ENCODE measurements at regions of chr7 and their contacts with region 1.

Region 1: DNA sequence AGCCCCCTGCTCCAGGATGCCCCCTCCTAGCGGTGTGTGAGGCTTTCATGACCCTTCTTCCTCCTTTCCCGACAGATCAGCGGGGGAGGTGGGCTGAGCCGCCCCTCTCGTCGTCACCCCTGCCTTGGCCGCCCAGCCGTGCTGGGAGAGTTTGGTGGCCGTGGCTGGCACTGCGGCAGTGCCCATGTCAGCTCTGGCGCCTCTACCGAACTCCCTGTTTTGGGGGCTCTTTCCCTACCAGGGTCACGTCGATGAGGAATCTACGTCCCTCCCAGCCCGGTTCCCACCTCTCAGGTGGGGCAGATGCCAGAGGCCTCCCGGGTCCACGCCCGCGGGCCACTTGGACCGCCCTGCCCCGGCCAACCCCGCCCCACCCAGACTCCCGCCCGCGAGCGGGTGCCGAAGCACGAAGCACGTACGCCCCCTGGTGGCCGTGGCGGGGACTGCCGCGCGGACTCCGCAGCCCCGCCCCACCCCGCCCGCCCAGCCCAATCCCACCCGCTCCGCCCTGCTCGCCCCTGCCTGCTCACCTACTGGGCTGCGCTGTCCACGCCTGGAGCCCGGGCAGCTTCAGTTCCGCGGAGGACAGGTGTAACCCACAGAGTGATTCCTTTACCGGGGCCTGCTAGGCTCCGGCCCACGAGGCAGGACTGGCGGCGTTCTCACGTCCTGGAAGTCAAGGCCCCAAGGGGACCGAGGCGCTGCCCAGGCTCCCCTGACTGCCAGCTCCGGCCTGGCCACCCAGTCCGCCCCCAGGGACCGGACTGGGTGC is 127.1 kb downstream of the UBE2H start:
- DNase-seq: peak; percentile 73
- H3K4me3 ChIP-seq: peak overlapping the region; percentile 70 to 84 (median 70)
- H3K27ac ChIP-seq: peak overlapping the region; percentile 62
- H3K4me1 ChIP-seq: peaks cover 27% of the 10 kb centered on the region
- H3K27me3 ChIP-seq: no peaks in the 10 kb centered on the region
- CTCF ChIP-seq: peak in 1 of 2 donors; percentile 66

Region 2: DNA sequence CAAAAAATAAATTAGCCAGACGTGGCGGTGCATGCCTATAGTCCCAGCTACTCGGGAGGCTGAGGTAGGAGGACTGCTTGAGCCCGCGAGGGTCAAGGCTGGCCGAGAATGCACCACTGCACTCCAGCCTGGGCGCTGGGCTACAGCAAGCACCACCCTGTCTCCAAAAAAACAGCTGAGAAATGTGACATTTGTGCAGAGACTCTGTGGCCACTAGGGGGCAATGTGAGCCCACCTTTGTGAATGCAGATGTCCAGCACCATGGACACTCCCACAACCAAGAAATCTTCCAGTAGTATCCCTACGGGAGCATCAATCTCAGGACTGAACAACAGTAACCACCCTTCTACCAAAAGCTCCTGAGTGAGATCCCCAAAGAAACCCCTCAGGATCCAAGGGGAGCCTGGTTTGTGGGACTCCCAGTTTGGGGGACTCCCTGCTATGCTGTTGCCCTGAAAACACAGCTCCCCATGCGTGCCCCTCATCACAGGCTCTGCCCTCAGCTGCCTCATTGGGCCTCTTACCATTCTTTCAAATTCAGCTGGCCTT is 607.1 kb before region 1 on chr7:
- CTCF ChIA-PET with region 1: interaction called, 7 read pairs
- dilution Hi-C with region 1: no loop called
- in situ Hi-C with region 1: no loop called
- intact Hi-C with region 1: loop called (anchors 5 kb)
- DNase-seq: peak; percentile 72
- H3K4me3 ChIP-seq: no peak overlapping the region
- H3K27ac ChIP-seq: no peak overlapping the region
- H3K4me1 ChIP-seq: no peaks in the 10 kb centered on the region
- H3K27me3 ChIP-seq: no peaks in the 10 kb centered on the region
- CTCF ChIP-seq: peak; percentile 88 to 89

Region 3: GRCh38 chr7:129502376-129502776 is 323.3 kb before region 1 on chr7 and contains the start of gene SMKR1:
- CTCF ChIA-PET with region 1: no interaction called
- dilution Hi-C with region 1: no loop called
- in situ Hi-C with region 1: no loop called
- intact Hi-C with region 1: loop called (anchors 5 kb)
- DNase-seq: peak; percentile 60
- H3K4me3 ChIP-seq: peak within 1 kb of the TSS; percentile 52 to 61 (median 53)
- H3K27ac ChIP-seq: no peak within 1 kb of the TSS
- H3K4me1 ChIP-seq: peaks cover 7% of the 10 kb centered on the region
- H3K27me3 ChIP-seq: no peaks in the 10 kb centered on the region
- CTCF ChIP-seq: no peak
- total RNA-seq, gene SMKR1: 0.80 TPM in 1 of 2 donors, not detected in the other

Region 4: DNA sequence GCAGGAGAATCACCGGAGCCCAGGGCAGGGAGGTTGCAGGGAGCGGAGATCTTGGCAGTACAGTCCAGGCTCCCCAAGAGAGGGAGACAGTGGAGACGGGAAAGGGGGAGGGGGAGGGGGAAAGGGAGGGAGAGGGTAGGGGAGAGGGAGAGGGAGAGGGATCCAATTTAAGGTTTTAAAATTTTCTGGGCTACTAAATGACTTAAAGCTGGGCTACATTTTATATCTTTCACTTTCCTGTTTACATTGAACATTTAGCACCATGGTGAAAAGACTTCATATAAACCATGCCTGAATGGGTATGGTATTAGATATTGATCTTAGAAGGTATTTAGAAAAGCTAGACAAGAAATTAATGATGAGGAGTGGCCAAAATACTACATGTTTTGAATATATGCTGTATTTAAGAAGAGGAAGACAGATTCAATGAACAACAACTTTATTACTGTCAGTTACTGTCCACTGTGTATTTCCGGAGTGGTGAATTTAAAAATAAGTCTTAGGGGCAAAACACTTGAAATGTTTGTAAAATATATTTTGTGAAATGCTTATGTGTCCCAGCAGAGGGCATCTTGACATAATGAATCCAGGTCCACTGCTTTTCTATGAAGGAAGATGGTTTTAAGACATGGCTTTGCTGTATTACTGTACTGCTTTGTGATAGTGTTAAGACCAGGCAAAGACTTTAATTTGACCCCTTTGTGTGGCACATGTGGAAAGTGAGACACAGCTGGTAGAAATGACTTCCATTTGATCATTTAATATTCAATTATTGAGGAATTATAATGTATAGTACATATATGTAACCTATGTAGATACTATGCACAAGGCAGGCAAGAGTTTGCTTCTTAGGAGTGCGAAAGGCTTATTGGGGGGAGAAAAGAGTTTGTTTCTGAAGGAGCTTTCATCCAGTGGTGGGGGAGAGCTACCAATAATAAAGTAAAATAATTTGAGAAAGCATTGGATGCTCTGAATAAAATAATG is 161.4 kb before region 1 on chr7:
- CTCF ChIA-PET with region 1: interaction called, 3 read pairs
- dilution Hi-C with region 1: no loop called
- in situ Hi-C with region 1: loop called (anchors 5 kb)
- intact Hi-C with region 1: loop called (anchors 1 kb)
- DNase-seq: peak; percentile 48
- H3K4me3 ChIP-seq: no peak overlapping the region
- H3K27ac ChIP-seq: peak overlapping the region; percentile 4
- H3K4me1 ChIP-seq: peaks cover 17% of the 10 kb centered on the region
- H3K27me3 ChIP-seq: no peaks in the 10 kb centered on the region
- CTCF ChIP-seq: peak; percentile 65 to 66

Region 5: DNA sequence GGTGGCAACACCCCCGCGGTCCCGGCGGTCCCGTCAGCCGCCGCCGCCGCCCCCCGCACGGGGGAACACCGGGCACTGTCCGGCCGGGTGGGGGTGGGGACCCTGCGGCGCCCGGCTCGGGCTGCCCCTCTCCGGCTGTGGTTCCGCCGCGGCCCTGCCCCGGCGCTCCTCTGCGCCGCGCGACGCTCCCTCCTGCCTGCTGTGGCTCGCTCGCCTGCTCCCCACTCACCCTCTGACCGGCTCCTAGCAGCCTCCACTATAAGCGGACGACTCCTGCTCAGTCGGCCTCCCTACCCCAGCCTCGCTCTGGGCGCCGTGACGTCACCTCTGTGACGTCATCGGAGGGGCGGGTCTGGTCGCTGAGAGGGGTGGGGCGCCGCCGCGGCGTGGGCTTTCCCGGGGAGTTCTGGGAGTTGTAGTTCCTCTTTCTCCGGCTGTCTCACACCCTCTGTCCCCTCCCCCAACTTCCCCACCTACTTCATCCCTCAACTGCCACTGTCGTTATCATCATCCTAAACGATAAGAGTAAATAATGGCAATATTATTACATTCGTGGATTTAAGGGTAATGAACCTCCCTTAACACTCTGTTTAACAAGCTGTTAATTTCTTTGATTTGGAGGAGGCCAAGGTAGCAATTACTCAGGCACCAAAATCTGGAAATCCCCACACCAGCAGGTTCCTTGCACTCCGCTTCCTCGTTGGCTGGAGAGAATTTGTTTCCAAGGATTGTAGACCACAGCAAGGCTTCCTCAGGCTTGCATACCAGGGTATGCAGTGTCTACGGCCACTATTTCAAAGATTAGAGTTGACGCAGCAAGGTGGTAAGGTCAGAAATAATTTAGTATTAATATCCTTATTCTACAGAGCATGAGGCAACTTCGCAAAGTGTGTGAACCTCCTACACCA is 127.2 kb after region 1 on chr7 and contains the start of gene UBE2H:
- CTCF ChIA-PET with region 1: no interaction called
- dilution Hi-C with region 1: no loop called
- in situ Hi-C with region 1: no loop called
- intact Hi-C with region 1: loop called (anchors 1 kb)
- DNase-seq: peak; percentile 92
- H3K4me3 ChIP-seq: peak within 1 kb of the TSS; percentile 69 to 91 (median 76)
- H3K27ac ChIP-seq: peak within 1 kb of the TSS; percentile 96
- H3K4me1 ChIP-seq: peaks cover 30% of the 10 kb centered on the region
- H3K27me3 ChIP-seq: no peaks in the 10 kb centered on the region
- CTCF ChIP-seq: no peak
- total RNA-seq, gene UBE2H: 122 to 126 TPM